Left cardiac atrium (tissue), 4 donors: ENCODE measurements at regions of chr21 and their contacts with region 1.

Region 1: GRCh38 chr21:29064850-29065481 is 8.5 kb downstream of the CCT8 start:
- DNase-seq: no peak
- ATAC-seq: peak in 1 of 2 donors; percentile 15

Region 2: DNA sequence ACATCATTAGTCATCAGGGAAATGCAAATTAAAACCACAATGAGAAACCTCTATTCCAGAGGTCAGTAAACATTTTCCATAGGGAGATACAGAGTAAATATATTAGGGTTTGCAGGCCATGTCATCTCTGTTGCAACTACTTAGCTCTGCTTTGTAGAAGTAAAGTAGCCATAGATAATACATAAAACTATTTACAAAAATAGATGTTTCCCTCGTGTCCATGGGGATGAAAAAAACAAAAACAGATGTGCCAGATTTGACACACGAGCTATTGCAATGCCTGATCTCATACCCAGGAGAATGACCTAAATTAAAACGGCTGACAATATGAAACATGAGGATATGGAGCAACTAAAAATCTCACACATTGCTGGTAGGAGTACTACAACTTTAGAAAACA is 89.6 kb before region 1 on chr21:
- intact Hi-C with region 1: loop called in 1 of 2 experiments (anchors 10 kb)
- DNase-seq: no peak
- ATAC-seq: no peak